Naive thymus-derived CD4-positive, alpha-beta T cell (primary cell): ENCODE measurements at regions of chr20 and their contacts with region 1.

Region 1: GRCh38 chr20:64255361-64256281 is at the start of gene PCMTD2:
- DNase-seq: peak; percentile 78 to 97 (median 88)
- ATAC-seq: peak; percentile 92
- H3K4me3 ChIP-seq: peak within 1 kb of the TSS; percentile 71
- H3K4me3 Mint-ChIP-seq: peak within 1 kb of the TSS; percentile 84 to 100 (median 94)
- H3K27ac ChIP-seq: peak within 1 kb of the TSS; percentile 92
- H3K27ac Mint-ChIP-seq: peak within 1 kb of the TSS; percentile 87 to 100 (median 97)
- H3K4me1 ChIP-seq: peaks cover 30 to 49% of the 10 kb centered on the region in 2 donors
- H3K4me1 Mint-ChIP-seq: peaks cover 46 to 55% (median 53%) of the 10 kb centered on the region in 7 donors
- H3K27me3 ChIP-seq: no peaks in the 10 kb centered on the region
- H3K27me3 Mint-ChIP-seq: peaks cover 0 to 21% (median 6%) of the 10 kb centered on the region in 5 donors
- total RNA-seq, gene PCMTD2: 67.2 to 229 (median 103) TPM

Region 2: GRCh38 chr20:64269604-64270411 is 14.2 kb after region 1 on chr20:
- CTCF ChIA-PET with region 1: interaction called, 3 read pairs
- POLR2A ChIA-PET with region 1: interaction called, 11 read pairs
- intact Hi-C with region 1: no loop called
- DNase-seq: no peak
- ATAC-seq: peak; percentile 20
- H3K4me3 ChIP-seq: no peak overlapping the region
- H3K4me3 Mint-ChIP-seq: no peak overlapping the region
- H3K27ac ChIP-seq: no peak overlapping the region
- H3K27ac Mint-ChIP-seq: peak overlapping the region in 3 of 9 donors; percentile 46 to 74 (median 71)
- H3K4me1 ChIP-seq: no peaks in the 10 kb centered on the region
- H3K4me1 Mint-ChIP-seq: peaks cover 0 to 37% (median 33%) of the 10 kb centered on the region in 7 donors
- H3K27me3 ChIP-seq: no peaks in the 10 kb centered on the region
- H3K27me3 Mint-ChIP-seq: no peaks in the 10 kb centered on the region